Naive thymus-derived CD4-positive, alpha-beta T cell (primary cell): ENCODE measurements at regions of chr10 and their contacts with region 1.

Region 1: GRCh38 chr10:97463363-97464132 is 17.6 kb downstream of the ZDHHC16 start:
- DNase-seq: peak in 7 of 9 donors; percentile 31 to 55 (median 46)
- ATAC-seq: peak; percentile 82
- H3K4me3 ChIP-seq: no peak overlapping the region
- H3K4me3 Mint-ChIP-seq: no peak overlapping the region
- H3K27ac ChIP-seq: no peak overlapping the region
- H3K27ac Mint-ChIP-seq: peak overlapping the region in 7 of 9 donors; percentile 24 to 76 (median 50)
- H3K4me1 ChIP-seq: no peaks in the 10 kb centered on the region
- H3K4me1 Mint-ChIP-seq: peaks cover 0 to 3% (median 0%) of the 10 kb centered on the region in 7 donors
- H3K27me3 ChIP-seq: no peaks in the 10 kb centered on the region
- H3K27me3 Mint-ChIP-seq: no peaks in the 10 kb centered on the region

Region 2: GRCh38 chr10:97425964-97426775 is 37.4 kb before region 1 on chr10 and contains the start of gene PGAM1:
- CTCF ChIA-PET with region 1: no interaction called
- POLR2A ChIA-PET with region 1: no interaction called
- intact Hi-C with region 1: no loop called
- DNase-seq: peak; percentile 93 to 98 (median 97)
- ATAC-seq: peak; percentile 91
- H3K4me3 ChIP-seq: peak within 1 kb of the TSS; percentile 92
- H3K4me3 Mint-ChIP-seq: peak within 1 kb of the TSS; percentile 83 to 97 (median 95)
- H3K27ac ChIP-seq: peak within 1 kb of the TSS; percentile 87
- H3K27ac Mint-ChIP-seq: peak within 1 kb of the TSS; percentile 77 to 99 (median 95)
- H3K4me1 ChIP-seq: peaks cover 20 to 29% of the 10 kb centered on the region in 2 donors
- H3K4me1 Mint-ChIP-seq: peaks cover 10 to 53% (median 34%) of the 10 kb centered on the region in 7 donors
- H3K27me3 ChIP-seq: no peaks in the 10 kb centered on the region
- H3K27me3 Mint-ChIP-seq: peaks cover 0 to 2% (median 0%) of the 10 kb centered on the region in 5 donors
- total RNA-seq, gene PGAM1: 58.5 to 536 (median 69.8) TPM

Region 3: GRCh38 chr10:97490592-97490991 is 27.0 kb after region 1 on chr10:
- CTCF ChIA-PET with region 1: interaction called, 4 read pairs
- POLR2A ChIA-PET with region 1: no interaction called
- intact Hi-C with region 1: loop called (anchors 2 to 5 kb)
- DNase-seq: no peak
- ATAC-seq: no peak
- H3K4me3 ChIP-seq: no peak overlapping the region
- H3K4me3 Mint-ChIP-seq: peak overlapping the region in 5 of 10 donors; percentile 6 to 56 (median 27)
- H3K27ac ChIP-seq: no peak overlapping the region
- H3K27ac Mint-ChIP-seq: peak overlapping the region in 6 of 9 donors; percentile 17 to 70 (median 55)
- H3K4me1 ChIP-seq: peaks cover 4 to 25% of the 10 kb centered on the region in 2 donors
- H3K4me1 Mint-ChIP-seq: peaks cover 28 to 72% (median 57%) of the 10 kb centered on the region in 7 donors
- H3K27me3 ChIP-seq: no peaks in the 10 kb centered on the region
- H3K27me3 Mint-ChIP-seq: no peaks in the 10 kb centered on the region

Region 4: DNA sequence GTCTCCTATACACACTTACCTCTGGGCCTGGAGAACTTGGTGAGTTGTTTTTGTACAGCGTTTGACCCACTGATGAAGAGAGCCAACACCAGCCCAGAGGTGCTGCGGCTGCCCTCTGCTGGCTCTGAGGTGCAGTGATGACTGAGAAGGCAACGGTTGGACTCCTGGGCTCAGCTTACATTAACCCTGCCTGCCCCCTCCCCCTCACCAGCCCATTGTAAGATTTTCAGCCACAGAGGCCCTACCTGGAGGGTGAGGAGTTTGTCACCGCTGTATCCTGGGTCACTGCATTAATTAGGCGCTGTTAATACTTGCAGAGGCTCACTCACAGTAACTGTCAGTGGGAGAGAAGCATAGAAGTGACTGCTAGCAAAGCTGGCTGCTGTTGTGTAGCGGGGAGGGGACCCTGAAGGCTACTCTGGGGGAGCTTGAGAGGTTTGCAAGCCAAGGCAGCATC is 90.1 kb after region 1 on chr10:
- CTCF ChIA-PET with region 1: interaction called, 64 read pairs
- POLR2A ChIA-PET with region 1: no interaction called
- intact Hi-C with region 1: loop called in 1 of 2 experiments (anchors 1 kb)
- DNase-seq: peak in 7 of 9 donors; percentile 27 to 60 (median 52)
- ATAC-seq: peak; percentile 64
- H3K4me3 ChIP-seq: no peak overlapping the region
- H3K4me3 Mint-ChIP-seq: no peak overlapping the region
- H3K27ac ChIP-seq: no peak overlapping the region
- H3K27ac Mint-ChIP-seq: no peak overlapping the region
- H3K4me1 ChIP-seq: no peaks in the 10 kb centered on the region
- H3K4me1 Mint-ChIP-seq: peaks cover 0 to 2% (median 0%) of the 10 kb centered on the region in 7 donors
- H3K27me3 ChIP-seq: no peaks in the 10 kb centered on the region
- H3K27me3 Mint-ChIP-seq: no peaks in the 10 kb centered on the region

Region 5: GRCh38 chr10:98528166-98528804 is 1064.7 kb after region 1 on chr10:
- CTCF ChIA-PET with region 1: no interaction called
- POLR2A ChIA-PET with region 1: no interaction called
- intact Hi-C with region 1: no loop called
- DNase-seq: no peak
- ATAC-seq: no peak
- H3K4me3 ChIP-seq: no peak overlapping the region
- H3K4me3 Mint-ChIP-seq: no peak overlapping the region
- H3K27ac ChIP-seq: no peak overlapping the region
- H3K27ac Mint-ChIP-seq: no peak overlapping the region
- H3K4me1 ChIP-seq: no peaks in the 10 kb centered on the region
- H3K4me1 Mint-ChIP-seq: no peaks in the 10 kb centered on the region
- H3K27me3 ChIP-seq: no peaks in the 10 kb centered on the region
- H3K27me3 Mint-ChIP-seq: peaks cover 4 to 16% (median 12%) of the 10 kb centered on the region in 5 donors